Esophagus squamous epithelium (tissue), 5 donors: ENCODE measurements at regions of chr22 and their contacts with region 1.

Region 1: GRCh38 chr22:37797874-37798500 is 9.7 kb upstream of the GCAT start:
- DNase-seq: no peak
- H3K4me3 ChIP-seq: no peak overlapping the region
- H3K27ac ChIP-seq: no peak overlapping the region
- H3K4me1 ChIP-seq: peaks cover 3 to 13% (median 11%) of the 10 kb centered on the region in 3 donors
- H3K27me3 ChIP-seq: no peaks in the 10 kb centered on the region
- CTCF ChIP-seq: no peak
- POLR2A ChIP-seq: no peak

Region 2: GRCh38 chr22:37492428-37493344 is 305.3 kb before region 1 on chr22:
- intact Hi-C with region 1: no loop called
- DNase-seq: no peak
- H3K4me3 ChIP-seq: no peak overlapping the region
- H3K27ac ChIP-seq: no peak overlapping the region
- H3K4me1 ChIP-seq: no peaks in the 10 kb centered on the region
- H3K27me3 ChIP-seq: peaks cover 0 to 4% (median 0%) of the 10 kb centered on the region in 4 donors
- CTCF ChIP-seq: peak in 3 of 6 experiments; percentile 19 to 50 (median 20)
- POLR2A ChIP-seq: no peak

Region 3: GRCh38 chr22:37633625-37634416 is 164.2 kb before region 1 on chr22:
- intact Hi-C with region 1: loop called (anchors 10 kb)
- DNase-seq: no peak
- H3K4me3 ChIP-seq: peak overlapping the region in 3 of 4 donors; percentile 9 to 48 (median 11)
- H3K27ac ChIP-seq: peak overlapping the region; percentile 70 to 94 (median 80)
- H3K4me1 ChIP-seq: peaks cover 27 to 68% (median 47%) of the 10 kb centered on the region in 3 donors
- H3K27me3 ChIP-seq: no peaks in the 10 kb centered on the region
- CTCF ChIP-seq: peak in 2 of 6 experiments; percentile 2 to 11
- POLR2A ChIP-seq: peak in 1 of 4 donors; percentile 25

Region 4: DNA sequence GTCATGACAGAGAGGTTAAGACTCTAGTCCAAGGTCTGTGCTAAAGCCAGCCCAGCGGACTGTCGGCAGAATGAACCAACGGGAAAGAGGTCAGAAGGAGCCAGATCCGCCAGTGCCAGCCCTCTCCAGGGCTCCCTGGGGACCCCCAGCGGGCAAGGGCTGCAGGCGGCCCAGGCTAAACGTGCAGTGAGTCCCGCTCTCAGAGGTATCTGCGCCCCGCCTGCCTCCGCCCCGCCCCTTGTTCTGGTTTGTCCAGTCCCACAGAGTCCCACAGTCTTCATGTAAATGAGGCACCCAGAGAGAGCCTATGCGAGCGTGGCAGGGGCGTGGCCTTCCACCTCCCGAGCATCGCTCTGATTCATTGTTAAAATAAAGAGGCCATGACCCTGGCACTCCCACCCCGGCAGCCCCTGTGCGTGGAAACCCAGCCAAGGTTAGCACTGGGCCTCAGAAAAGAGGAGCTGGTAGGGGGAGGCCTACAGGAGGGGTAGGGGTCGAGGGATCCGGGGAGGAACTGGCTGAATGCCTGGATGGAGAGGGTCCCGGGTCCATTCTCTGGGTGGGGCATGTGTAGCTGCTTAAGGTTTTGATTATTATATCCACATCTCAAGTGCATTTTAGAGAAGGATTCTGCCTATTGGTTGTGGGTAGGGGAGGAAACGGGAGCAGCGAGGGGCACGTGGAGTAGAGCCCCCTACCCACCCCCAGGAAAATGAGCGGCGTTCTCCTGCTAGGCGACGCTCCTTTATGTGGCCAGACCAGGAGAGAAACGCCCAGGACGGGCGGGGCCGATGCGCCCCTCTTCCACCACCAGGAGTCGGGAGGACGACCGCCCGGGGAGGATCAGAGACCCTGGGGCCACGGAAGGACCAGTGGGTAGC is 101.1 kb before region 1 on chr22 and contains the start of gene TRIOBP:
- intact Hi-C with region 1: no loop called
- DNase-seq: peak; percentile 40
- H3K4me3 ChIP-seq: peak within 1 kb of the TSS in 3 of 4 donors; percentile 23 to 54 (median 30)
- H3K27ac ChIP-seq: peak within 1 kb of the TSS; percentile 19 to 79 (median 56)
- H3K4me1 ChIP-seq: peaks cover 0 to 47% (median 11%) of the 10 kb centered on the region in 3 donors
- H3K27me3 ChIP-seq: no peaks in the 10 kb centered on the region
- CTCF ChIP-seq: peak in 5 of 6 experiments; percentile 19 to 60 (median 38)
- POLR2A ChIP-seq: peak in 2 of 4 donors; percentile 14 to 43
- total RNA-seq, gene TRIOBP: 67.6 to 149 (median 108) TPM